ENCODE measurements at regions of chr2 and their contacts with region 1.

Region 1: DNA sequence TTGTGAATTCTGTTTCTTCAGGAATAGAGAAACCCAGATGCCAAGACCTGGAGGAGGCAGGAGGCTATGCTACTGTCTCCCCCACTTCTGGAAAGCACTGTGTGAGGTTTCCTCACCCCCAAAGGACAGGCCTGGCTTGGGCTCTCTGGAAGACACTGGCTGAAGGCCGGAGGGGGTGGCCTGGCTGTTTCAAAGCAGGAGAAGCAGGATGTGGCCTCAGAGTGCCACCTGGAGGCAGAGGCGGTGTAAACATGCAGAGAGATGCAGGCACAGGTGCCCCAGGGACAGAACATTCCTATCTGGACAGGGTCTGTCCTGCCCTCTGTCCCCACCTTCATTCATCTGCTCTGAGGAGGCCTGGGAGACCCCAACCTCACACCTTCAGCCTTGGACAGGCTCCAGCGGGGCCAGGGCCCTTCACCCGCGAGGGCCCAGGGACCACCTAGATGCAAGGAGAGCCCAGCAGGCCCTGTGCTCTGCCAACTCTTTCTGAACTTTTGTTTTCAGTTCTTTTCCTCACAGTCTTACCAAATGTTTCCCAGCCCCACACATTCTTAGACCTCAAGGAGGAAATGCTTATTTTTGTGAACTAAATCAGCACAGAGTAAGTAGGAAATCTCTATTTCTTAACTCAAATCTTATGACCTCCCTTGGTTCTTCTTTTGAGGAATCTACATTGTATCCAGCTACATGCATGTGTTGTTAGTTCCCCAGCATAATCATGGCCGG is 79.2 kb downstream of the LONRF2 start:
- DNase-seq: peak; percentile 80
- ATAC-seq: peak; percentile 29
- H3K4me3 ChIP-seq: no peak overlapping the region
- H3K4me3 Mint-ChIP-seq: peak overlapping the region; percentile 57
- H3K27ac ChIP-seq: no peak overlapping the region
- H3K27ac Mint-ChIP-seq: peak overlapping the region; percentile 11
- H3K4me1 ChIP-seq: peaks cover 70 to 75% of the 10 kb centered on the region in 2 donors
- H3K4me1 Mint-ChIP-seq: peaks cover 71% of the 10 kb centered on the region
- H3K27me3 ChIP-seq: peaks cover 0 to 3% (median 1%) of the 10 kb centered on the region in 4 experiments
- H3K27me3 Mint-ChIP-seq: peaks cover 19% of the 10 kb centered on the region
- CTCF ChIP-seq: peak; percentile 84

Region 2: DNA sequence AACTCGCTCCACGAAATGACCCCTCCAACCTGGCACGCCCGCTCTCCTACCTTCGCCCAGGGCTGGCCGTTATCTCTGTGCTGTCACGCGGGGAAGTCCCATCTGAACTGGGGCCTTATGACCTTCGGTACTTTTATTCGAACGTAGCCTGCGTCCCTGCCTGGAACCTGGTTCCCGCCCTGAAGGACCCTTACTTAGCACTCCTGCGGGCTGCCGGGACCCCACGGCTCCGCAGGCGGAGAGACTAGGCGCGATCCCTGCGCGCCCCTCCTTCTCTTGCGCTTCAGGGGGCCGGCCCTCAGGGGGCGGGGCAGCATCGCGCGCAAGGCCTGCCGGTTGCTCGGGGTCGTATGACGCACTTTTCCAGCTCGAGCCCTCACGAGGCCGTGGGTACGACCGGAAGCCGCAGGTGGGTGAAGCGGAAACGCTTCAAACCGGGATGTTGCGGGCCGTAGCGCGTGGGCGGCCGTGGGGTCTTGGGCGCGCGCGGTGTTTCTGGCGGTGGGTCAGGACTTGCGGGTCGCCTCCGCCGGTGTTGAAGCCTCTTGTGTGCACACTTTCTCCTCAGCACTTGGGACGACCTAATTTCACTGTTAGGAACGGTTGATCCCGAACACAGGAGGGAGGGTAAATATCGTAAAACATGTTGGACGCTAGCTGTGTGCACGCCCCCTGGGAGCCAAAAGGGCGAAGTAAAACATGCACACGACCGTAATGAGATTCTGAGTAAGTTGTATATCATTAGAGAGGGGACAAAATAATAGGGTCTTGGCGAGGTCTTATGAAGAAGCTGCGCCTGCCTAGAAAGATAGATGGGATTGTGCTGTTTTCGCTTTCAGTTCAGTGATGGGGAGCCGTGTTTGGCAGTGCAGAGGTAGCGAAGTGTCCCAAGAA is 1088.2 kb before region 1 on chr2 and contains the starts of genes LIPT1 and TSGA10:
- CTCF ChIA-PET with region 1: no interaction called
- POLR2A ChIA-PET with region 1: no interaction called
- intact Hi-C with region 1: loop called (anchors 10 kb)
- DNase-seq: peak; percentile 97
- ATAC-seq: peak; percentile 90
- H3K4me3 ChIP-seq: peak within 1 kb of the TSS; percentile 86 to 98 (median 94)
- H3K4me3 Mint-ChIP-seq: no peak within 1 kb of the TSS
- H3K27ac ChIP-seq: peak within 1 kb of the TSS; percentile 91 to 99
- H3K27ac Mint-ChIP-seq: peak within 1 kb of the TSS; percentile 91
- H3K4me1 ChIP-seq: peaks cover 27 to 29% of the 10 kb centered on the region in 2 donors
- H3K4me1 Mint-ChIP-seq: peaks cover 47% of the 10 kb centered on the region
- H3K27me3 ChIP-seq: no peaks in the 10 kb centered on the region
- H3K27me3 Mint-ChIP-seq: no peaks in the 10 kb centered on the region
- CTCF ChIP-seq: no peak
- total RNA-seq, gene LIPT1: 24.3 and 26.2 TPM in 2 replicates
- total RNA-seq, gene TSGA10: 36.9 and 39.6 TPM in 2 replicates

Region 3: DNA sequence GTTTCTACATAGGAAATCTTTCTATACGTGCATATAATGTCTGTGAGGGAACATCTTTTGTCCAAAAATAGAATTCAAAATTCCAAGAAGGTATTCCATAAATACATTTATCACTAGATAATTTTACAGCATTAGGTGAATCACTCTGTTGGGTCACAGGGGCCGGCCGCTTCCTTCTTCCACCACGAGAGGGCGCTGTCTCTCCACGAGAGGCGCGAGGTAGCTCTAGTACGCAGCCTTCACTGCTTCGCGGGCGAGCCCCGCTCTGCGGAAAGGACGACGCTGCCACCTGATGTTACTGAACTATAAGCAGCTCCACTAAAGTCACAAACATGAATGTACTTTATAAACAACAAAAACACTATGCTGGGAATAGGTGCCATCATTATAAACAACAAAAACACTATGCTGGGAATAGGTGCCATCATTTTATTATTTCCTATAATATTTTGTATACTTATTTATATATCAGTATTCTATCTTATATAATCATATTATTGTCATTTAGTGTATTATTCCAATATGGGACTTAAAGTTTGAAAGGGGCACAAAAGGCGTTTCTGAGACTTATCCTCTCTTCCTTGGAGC is 683.9 kb before region 1 on chr2:
- CTCF ChIA-PET with region 1: interaction called, 22 read pairs
- POLR2A ChIA-PET with region 1: no interaction called
- intact Hi-C with region 1: loop called (anchors 5 kb)
- DNase-seq: peak; percentile 84
- ATAC-seq: peak; percentile 95
- H3K4me3 ChIP-seq: no peak overlapping the region
- H3K4me3 Mint-ChIP-seq: no peak overlapping the region
- H3K27ac ChIP-seq: peak overlapping the region in 1 of 2 donors; percentile 25
- H3K27ac Mint-ChIP-seq: peak overlapping the region; percentile 65
- H3K4me1 ChIP-seq: no peaks in the 10 kb centered on the region
- H3K4me1 Mint-ChIP-seq: peaks cover 4% of the 10 kb centered on the region
- H3K27me3 ChIP-seq: no peaks in the 10 kb centered on the region
- H3K27me3 Mint-ChIP-seq: no peaks in the 10 kb centered on the region
- CTCF ChIP-seq: peak; percentile 100

Region 4: GRCh38 chr2:99765731-99766335 is 477.2 kb before region 1 on chr2:
- CTCF ChIA-PET with region 1: no interaction called
- POLR2A ChIA-PET with region 1: no interaction called
- intact Hi-C with region 1: no loop called
- DNase-seq: no peak
- ATAC-seq: no peak
- H3K4me3 ChIP-seq: no peak overlapping the region
- H3K4me3 Mint-ChIP-seq: no peak overlapping the region
- H3K27ac ChIP-seq: no peak overlapping the region
- H3K27ac Mint-ChIP-seq: no peak overlapping the region
- H3K4me1 ChIP-seq: peaks cover 0 to 3% of the 10 kb centered on the region in 2 donors
- H3K4me1 Mint-ChIP-seq: peaks cover 20% of the 10 kb centered on the region
- H3K27me3 ChIP-seq: no peaks in the 10 kb centered on the region
- H3K27me3 Mint-ChIP-seq: no peaks in the 10 kb centered on the region
- CTCF ChIP-seq: no peak

Region 5: GRCh38 chr2:99864561-99865553 is 378.2 kb before region 1 on chr2:
- CTCF ChIA-PET with region 1: interaction called, 5 read pairs
- POLR2A ChIA-PET with region 1: no interaction called
- intact Hi-C with region 1: loop called (anchors 5 kb)
- DNase-seq: no peak
- ATAC-seq: no peak
- H3K4me3 ChIP-seq: no peak overlapping the region
- H3K4me3 Mint-ChIP-seq: no peak overlapping the region
- H3K27ac ChIP-seq: no peak overlapping the region
- H3K27ac Mint-ChIP-seq: peak overlapping the region; percentile 61
- H3K4me1 ChIP-seq: peaks cover 58 to 64% of the 10 kb centered on the region in 2 donors
- H3K4me1 Mint-ChIP-seq: peaks cover 84% of the 10 kb centered on the region
- H3K27me3 ChIP-seq: no peaks in the 10 kb centered on the region
- H3K27me3 Mint-ChIP-seq: no peaks in the 10 kb centered on the region
- CTCF ChIP-seq: no peak

Region 6: GRCh38 chr2:100013892-100014677 is 229.0 kb before region 1 on chr2:
- CTCF ChIA-PET with region 1: interaction called, 3 read pairs
- POLR2A ChIA-PET with region 1: no interaction called
- intact Hi-C with region 1: loop called (anchors 5 kb)
- DNase-seq: no peak
- ATAC-seq: no peak
- H3K4me3 ChIP-seq: no peak overlapping the region
- H3K4me3 Mint-ChIP-seq: no peak overlapping the region
- H3K27ac ChIP-seq: peak overlapping the region in 1 of 2 donors; percentile 17
- H3K27ac Mint-ChIP-seq: no peak overlapping the region
- H3K4me1 ChIP-seq: peaks cover 5 to 11% of the 10 kb centered on the region in 2 donors
- H3K4me1 Mint-ChIP-seq: peaks cover 42% of the 10 kb centered on the region
- H3K27me3 ChIP-seq: no peaks in the 10 kb centered on the region
- H3K27me3 Mint-ChIP-seq: no peaks in the 10 kb centered on the region
- CTCF ChIP-seq: no peak

Region 7: DNA sequence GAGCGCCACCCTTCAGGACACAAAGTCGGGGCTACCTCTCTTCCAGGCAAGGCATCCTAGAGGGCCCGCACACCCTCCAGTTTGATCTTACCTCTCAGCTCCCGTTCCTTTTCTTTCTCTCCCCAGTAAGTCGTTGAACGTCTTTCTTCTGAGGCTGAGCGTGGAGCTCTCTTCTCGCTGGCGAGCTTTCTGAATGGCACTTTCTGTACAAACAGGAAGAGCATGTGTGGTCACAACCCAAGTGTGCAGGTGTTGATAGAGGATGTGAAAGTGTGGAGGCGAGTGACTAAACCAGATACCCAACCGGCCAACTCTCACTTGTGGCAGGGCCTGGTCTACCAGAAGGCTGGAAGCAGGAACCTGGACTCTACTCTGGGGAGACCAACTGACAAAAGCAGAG is 100.7 kb before region 1 on chr2 and contains the start of gene AFF3:
- CTCF ChIA-PET with region 1: interaction called, 14 read pairs
- POLR2A ChIA-PET with region 1: interaction called, 34 read pairs
- intact Hi-C with region 1: loop called (anchors 1 kb)
- DNase-seq: peak; percentile 93
- ATAC-seq: peak; percentile 81
- H3K4me3 ChIP-seq: peak within 1 kb of the TSS; percentile 66 to 98 (median 91)
- H3K4me3 Mint-ChIP-seq: peak within 1 kb of the TSS; percentile 99
- H3K27ac ChIP-seq: peak within 1 kb of the TSS; percentile 83 to 88
- H3K27ac Mint-ChIP-seq: peak within 1 kb of the TSS; percentile 91
- H3K4me1 ChIP-seq: peaks cover 57 to 58% of the 10 kb centered on the region in 2 donors
- H3K4me1 Mint-ChIP-seq: peaks cover 67% of the 10 kb centered on the region
- H3K27me3 ChIP-seq: no peaks in the 10 kb centered on the region
- H3K27me3 Mint-ChIP-seq: no peaks in the 10 kb centered on the region
- CTCF ChIP-seq: no peak
- total RNA-seq, gene AFF3: 826 and 830 TPM in 2 replicates

Region 8: GRCh38 chr2:100580367-100581276 is 337.6 kb after region 1 on chr2:
- CTCF ChIA-PET with region 1: no interaction called
- POLR2A ChIA-PET with region 1: interaction called, 5 read pairs
- intact Hi-C with region 1: loop called (anchors 5 kb)
- DNase-seq: peak; percentile 87
- ATAC-seq: peak; percentile 78
- H3K4me3 ChIP-seq: peak overlapping the region in 4 of 5 experiments; percentile 0 to 36 (median 20)
- H3K4me3 Mint-ChIP-seq: peak overlapping the region; percentile 78
- H3K27ac ChIP-seq: peak overlapping the region; percentile 91 to 95
- H3K27ac Mint-ChIP-seq: peak overlapping the region; percentile 99
- H3K4me1 ChIP-seq: peaks cover 18 to 20% of the 10 kb centered on the region in 2 donors
- H3K4me1 Mint-ChIP-seq: peaks cover 25% of the 10 kb centered on the region
- H3K27me3 ChIP-seq: no peaks in the 10 kb centered on the region
- H3K27me3 Mint-ChIP-seq: no peaks in the 10 kb centered on the region
- CTCF ChIP-seq: no peak

Measured in B cell (primary cell).